Caco-2 (cell line): ENCODE measurements at regions of chr19 and their contacts with region 1.

Region 1: DNA sequence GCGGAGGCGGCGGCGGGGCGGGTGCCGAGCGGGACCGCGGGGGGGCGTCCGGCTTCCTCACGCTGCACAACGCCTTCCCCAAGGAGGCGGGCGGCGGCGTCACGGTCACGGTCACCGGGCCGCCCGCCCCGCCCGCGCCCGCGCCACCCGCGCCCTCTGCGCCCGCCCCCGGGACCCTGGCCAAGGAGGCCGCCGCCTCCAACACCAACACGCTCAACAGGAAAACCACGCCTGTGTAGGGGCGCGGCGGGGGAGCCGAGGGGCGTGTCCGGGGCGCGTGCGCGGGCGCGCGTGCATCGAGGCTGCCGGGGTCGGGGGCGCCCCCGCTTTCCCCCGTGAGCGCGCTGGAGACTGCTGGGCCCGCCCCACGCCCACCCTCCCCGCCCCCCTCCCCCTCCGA is 8.8 kb upstream of the CACNG6 start:
- DNase-seq: no peak
- H3K4me3 ChIP-seq: peak overlapping the region; percentile 27
- H3K4me3 Mint-ChIP-seq: no peak overlapping the region
- H3K27ac Mint-ChIP-seq: no peak overlapping the region
- H3K4me1 ChIP-seq: no peaks in the 10 kb centered on the region
- H3K4me1 Mint-ChIP-seq: no peaks in the 10 kb centered on the region
- H3K27me3 ChIP-seq: no peaks in the 10 kb centered on the region
- H3K27me3 Mint-ChIP-seq: no peaks in the 10 kb centered on the region
- CTCF ChIP-seq: no peak

Region 2: GRCh38 chr19:53892981-53893325 is 89.7 kb before region 1 on chr19:
- CTCF ChIA-PET with region 1: no interaction called
- POLR2A ChIA-PET with region 1: no interaction called
- intact Hi-C with region 1: loop called (anchors 1 kb)
- DNase-seq: no peak
- H3K4me3 ChIP-seq: no peak overlapping the region
- H3K4me3 Mint-ChIP-seq: no peak overlapping the region
- H3K27ac Mint-ChIP-seq: no peak overlapping the region
- H3K4me1 ChIP-seq: no peaks in the 10 kb centered on the region
- H3K4me1 Mint-ChIP-seq: no peaks in the 10 kb centered on the region
- H3K27me3 ChIP-seq: no peaks in the 10 kb centered on the region
- H3K27me3 Mint-ChIP-seq: no peaks in the 10 kb centered on the region
- CTCF ChIP-seq: no peak

Region 3: DNA sequence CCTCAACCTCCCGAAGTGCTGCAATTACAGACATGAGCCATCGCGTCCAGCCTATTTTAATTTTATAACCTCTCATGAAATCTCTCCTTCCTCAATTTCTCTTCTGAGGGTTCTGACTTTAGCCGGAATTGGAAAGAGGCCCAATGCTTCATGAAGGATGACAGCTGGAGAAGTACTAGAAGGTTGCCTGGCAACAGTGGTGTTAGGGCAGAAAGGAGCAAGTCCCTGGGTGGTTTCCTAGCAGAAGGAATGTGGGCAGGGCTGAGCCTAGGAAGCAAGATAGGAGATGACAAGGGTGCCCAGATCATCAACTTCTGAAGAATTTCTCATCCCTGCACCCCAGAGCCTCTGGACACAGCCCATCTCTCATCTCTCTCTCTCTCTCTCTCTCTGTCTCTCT is 34.6 kb after region 1 on chr19:
- CTCF ChIA-PET with region 1: no interaction called
- POLR2A ChIA-PET with region 1: no interaction called
- intact Hi-C with region 1: no loop called
- DNase-seq: no peak
- H3K4me3 ChIP-seq: no peak overlapping the region
- H3K4me3 Mint-ChIP-seq: no peak overlapping the region
- H3K27ac Mint-ChIP-seq: no peak overlapping the region
- H3K4me1 ChIP-seq: peaks cover 5% of the 10 kb centered on the region
- H3K4me1 Mint-ChIP-seq: peaks cover 6% of the 10 kb centered on the region
- H3K27me3 ChIP-seq: no peaks in the 10 kb centered on the region
- H3K27me3 Mint-ChIP-seq: no peaks in the 10 kb centered on the region
- CTCF ChIP-seq: no peak